HCT116 (cell line): ENCODE measurements at regions of chr10 and their contacts with region 1.

Region 1: GRCh38 chr10:128035557-128035973 is 90.7 kb downstream of the MKI67 start:
- DNase-seq: peak; percentile 21
- ATAC-seq: peak; percentile 88
- H3K4me3 ChIP-seq: no peak overlapping the region
- H3K27ac ChIP-seq: no peak overlapping the region
- H3K4me1 ChIP-seq: peaks cover 7 to 13% of the 10 kb centered on the region in 2 experiments; a peak in 3 of 4 replicates
- H3K27me3 ChIP-seq: no peaks in the 10 kb centered on the region
- CTCF ChIP-seq: peak; percentile 75 to 98 (median 97)
- POLR2A ChIP-seq: no peak
- RAD21 ChIP-seq: peak; percentile 81

Region 2: DNA sequence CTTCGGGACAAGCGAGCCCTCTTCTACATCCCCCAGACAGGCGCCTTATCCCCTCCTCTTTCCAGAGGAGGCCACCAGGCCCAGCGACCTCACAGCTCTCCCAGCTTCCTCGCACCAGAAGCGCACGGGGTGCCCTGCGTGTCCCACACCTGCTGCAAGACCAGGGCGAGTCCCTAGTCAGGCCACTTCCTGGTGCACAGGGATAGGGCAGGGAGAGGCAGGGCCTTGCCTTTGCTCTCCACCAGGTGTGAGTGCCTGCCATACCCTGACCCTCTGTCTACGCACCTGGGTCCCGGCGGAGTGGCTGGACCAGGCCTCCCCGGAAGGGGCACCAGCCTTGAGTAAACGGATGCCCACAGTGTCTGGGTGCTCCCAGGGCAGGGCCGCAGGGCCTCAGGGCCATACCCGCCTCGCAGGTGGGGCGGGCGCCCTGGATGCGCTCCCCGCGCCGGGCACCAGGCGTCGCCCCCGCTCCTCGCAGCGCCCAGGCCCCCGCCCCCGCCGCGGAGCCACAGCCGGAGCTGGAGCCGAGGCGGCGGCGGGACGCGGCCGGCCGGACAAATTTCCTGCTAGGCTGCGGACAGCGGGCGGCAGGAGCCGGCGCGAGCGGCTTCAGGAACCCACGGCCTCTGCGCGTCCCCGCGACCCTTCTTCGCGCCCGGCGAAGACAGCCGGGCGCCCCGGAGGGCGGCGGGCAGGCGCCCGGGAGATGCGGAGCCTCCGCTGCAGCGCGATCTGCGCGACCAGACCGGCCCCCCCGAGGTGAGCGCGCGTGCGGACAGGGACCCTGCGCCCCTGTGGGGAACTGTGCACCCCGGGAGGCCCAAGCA is 128.8 kb before region 1 on chr10 and contains the start of gene PTPRE:
- CTCF ChIA-PET with region 1: interaction called, 13 read pairs
- POLR2A ChIA-PET with region 1: no interaction called
- RAD21 ChIA-PET with region 1: interaction called in 1 of 2 experiments, 4 read pairs
- intact Hi-C with region 1: no loop called
- DNase-seq: peak; percentile 40
- ATAC-seq: peak; percentile 92
- H3K4me3 ChIP-seq: peak within 1 kb of the TSS; percentile 44 to 62
- H3K27ac ChIP-seq: peak within 1 kb of the TSS; percentile 56; the same call in 1 of the 2 replicates
- H3K4me1 ChIP-seq: peaks cover 25 to 46% of the 10 kb centered on the region in 2 experiments
- H3K27me3 ChIP-seq: no peaks in the 10 kb centered on the region
- CTCF ChIP-seq: peak; percentile 64 to 78 (median 67)
- POLR2A ChIP-seq: no peak
- RAD21 ChIP-seq: peak; percentile 93
- total RNA-seq, gene PTPRE: 12.3 TPM

Region 3: DNA sequence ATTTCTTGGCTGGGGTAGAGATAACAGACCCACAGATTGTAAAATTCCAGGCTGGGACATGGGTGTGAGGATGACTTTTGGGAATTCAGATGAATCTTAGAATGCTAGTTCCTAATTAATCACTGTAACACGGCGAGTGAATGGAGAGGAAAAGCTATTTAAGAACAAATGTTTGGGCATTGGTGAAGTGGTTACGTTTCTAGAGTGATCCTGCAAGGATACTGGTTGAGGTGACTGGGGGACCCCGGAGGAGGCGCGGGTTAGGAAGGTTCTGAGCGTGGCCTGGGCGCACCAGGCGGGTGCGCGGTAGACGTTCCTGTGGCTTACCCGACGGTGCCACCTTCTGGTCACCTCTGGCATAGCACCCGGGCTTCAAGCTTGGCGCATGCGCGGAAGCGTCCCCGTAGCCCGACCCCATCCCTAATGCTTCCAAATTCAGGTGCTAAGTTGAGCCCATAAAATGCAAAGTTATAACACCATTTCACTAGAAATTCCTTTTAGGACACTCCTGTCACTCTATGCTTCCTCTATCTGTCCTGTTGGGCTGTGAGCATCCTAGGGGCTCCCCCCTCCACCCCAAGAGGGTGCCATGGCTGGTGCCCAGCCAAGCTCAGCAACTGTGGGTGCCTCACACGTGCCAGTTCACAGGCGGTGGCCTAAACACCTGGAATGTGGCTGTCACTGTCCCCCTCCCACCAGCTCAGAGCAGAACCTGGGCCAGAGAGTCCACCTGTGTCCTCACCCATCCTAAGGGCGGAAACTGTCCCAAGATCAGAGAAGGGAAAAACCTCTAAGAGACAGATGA is 24.2 kb before region 1 on chr10:
- CTCF ChIA-PET with region 1: interaction called, 27 read pairs
- POLR2A ChIA-PET with region 1: no interaction called
- RAD21 ChIA-PET with region 1: no interaction called
- intact Hi-C with region 1: no loop called
- DNase-seq: peak; percentile 54
- ATAC-seq: peak; percentile 95
- H3K4me3 ChIP-seq: no peak overlapping the region; a peak in 1 of 4 replicates
- H3K27ac ChIP-seq: no peak overlapping the region
- H3K4me1 ChIP-seq: peaks cover 3 to 9% of the 10 kb centered on the region in 2 experiments; a peak in 3 of 4 replicates
- H3K27me3 ChIP-seq: no peaks in the 10 kb centered on the region; the same call in 1 of the 2 replicates
- CTCF ChIP-seq: peak; percentile 98 to 99 (median 99)
- POLR2A ChIP-seq: no peak
- RAD21 ChIP-seq: peak; percentile 100

Region 4: DNA sequence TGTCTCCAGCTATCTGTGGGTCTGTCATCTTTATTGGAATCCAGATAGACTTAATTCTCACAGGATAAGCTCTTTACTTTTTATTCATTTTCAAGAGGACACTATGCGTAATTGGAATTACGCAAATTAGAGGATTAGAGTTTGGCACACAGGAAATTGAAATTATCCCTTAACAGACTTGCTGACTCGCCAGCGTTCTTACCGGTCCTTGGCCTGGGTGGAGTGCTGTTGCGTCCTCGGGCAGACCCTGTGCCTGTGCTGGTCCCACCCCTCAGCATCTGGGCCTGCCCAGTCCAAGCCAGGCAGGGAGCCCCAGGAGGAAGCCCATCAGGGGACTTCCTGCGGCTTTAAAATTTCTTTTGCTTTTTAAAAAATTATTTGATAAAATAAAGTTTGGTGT is 11.1 kb before region 1 on chr10:
- CTCF ChIA-PET with region 1: interaction called, 10 read pairs
- POLR2A ChIA-PET with region 1: no interaction called
- RAD21 ChIA-PET with region 1: no interaction called
- intact Hi-C with region 1: no loop called
- DNase-seq: no peak
- ATAC-seq: no peak
- H3K4me3 ChIP-seq: no peak overlapping the region
- H3K27ac ChIP-seq: no peak overlapping the region
- H3K4me1 ChIP-seq: 0 out of 4 replicates have a peak, but pooled peaks cover 0 to 3% of the 10 kb centered on the region in 2 experiments
- H3K27me3 ChIP-seq: no peaks in the 10 kb centered on the region
- CTCF ChIP-seq: no peak
- POLR2A ChIP-seq: no peak
- RAD21 ChIP-seq: no peak

Region 5: GRCh38 chr10:128047351-128047750 is 11.8 kb after region 1 on chr10:
- CTCF ChIA-PET with region 1: interaction called, 35 read pairs
- POLR2A ChIA-PET with region 1: interaction called, 6 read pairs
- RAD21 ChIA-PET with region 1: no interaction called
- intact Hi-C with region 1: no loop called
- DNase-seq: peak; percentile 88
- ATAC-seq: peak; percentile 100
- H3K4me3 ChIP-seq: peak overlapping the region; percentile 43 to 52
- H3K27ac ChIP-seq: peak overlapping the region; percentile 34; the same call in 1 of the 2 replicates
- H3K4me1 ChIP-seq: peaks cover 10 to 23% of the 10 kb centered on the region in 2 experiments; a peak in 3 of 4 replicates
- H3K27me3 ChIP-seq: no peaks in the 10 kb centered on the region
- CTCF ChIP-seq: no peak
- POLR2A ChIP-seq: peak; percentile 61
- RAD21 ChIP-seq: no peak